ENCODE measurements at regions of chr18 and their contacts with region 1.

Region 1: GRCh38 chr18:31329787-31330438 is 12.0 kb downstream of the DSG1 start:
- DNase-seq: no peak
- ATAC-seq: no peak
- H3K4me3 Mint-ChIP-seq: no peak overlapping the region
- H3K27ac Mint-ChIP-seq: no peak overlapping the region
- H3K4me1 Mint-ChIP-seq: no peaks in the 10 kb centered on the region
- H3K27me3 Mint-ChIP-seq: no peaks in the 10 kb centered on the region
- CTCF ChIP-seq: no peak

Region 2: GRCh38 chr18:31356025-31356424 is 26.1 kb after region 1 on chr18:
- CTCF ChIA-PET with region 1: no interaction called
- POLR2A ChIA-PET with region 1: no interaction called
- intact Hi-C with region 1: loop called (anchors 1 kb)
- DNase-seq: no peak
- ATAC-seq: no peak
- H3K4me3 Mint-ChIP-seq: no peak overlapping the region
- H3K27ac Mint-ChIP-seq: no peak overlapping the region
- H3K4me1 Mint-ChIP-seq: no peaks in the 10 kb centered on the region
- H3K27me3 Mint-ChIP-seq: no peaks in the 10 kb centered on the region
- CTCF ChIP-seq: no peak